SK-N-SH (cell line): ENCODE measurements at regions of chr1 and their contacts with region 1.

Region 1: GRCh38 chr1:22963044-22963677 is 9.5 kb downstream of the LACTBL1 start:
- DNase-seq: no peak
- H3K4me3 ChIP-seq: no peak overlapping the region
- H3K27ac ChIP-seq: no peak overlapping the region
- H3K4me1 ChIP-seq: no peaks in the 10 kb centered on the region
- H3K27me3 ChIP-seq: no peaks in the 10 kb centered on the region
- CTCF ChIP-seq: no peak
- EP300 ChIP-seq: no peak
- RAD21 ChIP-seq: no peak

Region 2: DNA sequence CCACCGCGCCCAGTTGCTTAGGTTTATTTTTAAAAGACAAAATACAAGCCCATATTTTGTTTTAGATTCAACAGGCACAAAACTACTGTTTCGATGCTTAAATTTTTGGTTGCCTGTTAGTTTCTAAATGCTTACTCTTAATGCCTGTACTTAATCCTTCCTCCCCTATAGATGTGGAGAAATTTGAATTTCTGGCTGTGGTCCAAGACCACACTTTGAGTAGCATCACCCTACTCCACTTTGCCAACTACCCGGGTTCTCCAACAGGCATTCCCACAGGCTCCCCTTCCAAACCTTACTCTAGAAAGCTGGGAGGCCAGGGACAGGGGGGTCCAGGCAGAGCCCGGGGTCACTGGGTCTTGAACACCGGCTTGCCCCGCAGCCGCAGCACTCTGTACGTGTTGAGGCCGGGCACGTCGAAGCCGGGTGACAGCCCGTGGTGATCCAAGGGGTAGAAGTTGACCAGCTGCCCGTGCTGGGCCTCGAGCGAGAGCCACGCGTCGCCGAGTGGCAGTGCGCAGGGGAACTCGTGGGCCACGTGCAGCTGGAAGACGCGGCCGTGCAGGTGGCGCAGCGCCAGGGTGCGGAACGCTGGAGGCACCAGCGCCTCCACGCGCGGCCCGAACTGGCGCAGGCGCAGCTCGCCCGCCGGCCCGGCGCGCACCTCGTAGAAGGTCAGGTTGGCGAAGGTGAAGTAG is 10.3 kb before region 1 on chr1:
- CTCF ChIA-PET with region 1: interaction called, 20 read pairs
- POLR2A ChIA-PET with region 1: no interaction called
- DNase-seq: peak; percentile 74
- H3K4me3 ChIP-seq: no peak overlapping the region
- H3K27ac ChIP-seq: no peak overlapping the region
- H3K4me1 ChIP-seq: no peaks in the 10 kb centered on the region; a peak in 1 of 4 replicates
- H3K27me3 ChIP-seq: peaks cover 36% of the 10 kb centered on the region
- CTCF ChIP-seq: no peak
- EP300 ChIP-seq: no peak
- RAD21 ChIP-seq: no peak

Region 3: DNA sequence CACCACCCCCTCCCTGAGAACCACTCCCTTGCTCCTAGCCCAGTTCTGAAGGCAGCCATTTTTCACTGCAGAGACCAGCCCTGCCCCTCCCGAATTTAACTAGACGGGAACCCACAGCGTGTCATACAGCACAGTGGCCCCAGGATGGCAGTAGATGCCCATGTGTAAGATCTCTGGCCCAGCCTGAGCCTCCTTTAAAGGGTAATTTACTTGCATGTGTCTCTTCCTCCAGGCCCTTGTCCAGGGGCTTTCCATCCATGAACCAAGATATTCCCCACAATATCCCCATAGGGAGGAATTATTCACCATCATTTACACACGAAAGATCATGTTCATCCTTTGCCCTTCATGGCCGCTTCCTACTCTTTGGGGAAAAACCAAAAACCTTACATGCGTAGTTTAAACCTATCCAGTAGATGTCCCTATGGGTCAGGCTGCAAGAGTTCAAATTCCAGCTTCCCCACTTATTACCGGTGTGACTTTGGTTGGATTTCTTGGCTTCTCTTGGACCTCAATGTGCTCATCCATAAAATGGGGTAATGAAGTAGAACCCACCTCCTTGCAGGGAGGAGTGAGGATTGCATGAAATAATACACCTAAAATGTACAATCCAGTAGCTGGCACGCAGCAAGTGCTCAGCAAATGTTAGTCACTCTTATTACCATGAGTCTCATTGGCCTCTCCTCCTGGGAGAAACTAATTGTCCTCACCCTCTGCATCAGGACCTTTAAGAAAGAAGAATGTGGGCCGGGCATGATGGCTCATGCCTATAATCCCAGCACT is 13.5 kb after region 1 on chr1:
- CTCF ChIA-PET with region 1: interaction called, 11 read pairs
- POLR2A ChIA-PET with region 1: no interaction called
- DNase-seq: peak; percentile 82
- H3K4me3 ChIP-seq: no peak overlapping the region
- H3K27ac ChIP-seq: no peak overlapping the region
- H3K4me1 ChIP-seq: peaks cover 3 to 13% of the 10 kb centered on the region in 2 experiments; a peak in 2 of 4 replicates
- H3K27me3 ChIP-seq: no peaks in the 10 kb centered on the region
- CTCF ChIP-seq: peak; percentile 88
- EP300 ChIP-seq: no peak
- RAD21 ChIP-seq: peak; percentile 91